ENCODE measurements at regions of chr16 and their contacts with region 1.

Region 1: DNA sequence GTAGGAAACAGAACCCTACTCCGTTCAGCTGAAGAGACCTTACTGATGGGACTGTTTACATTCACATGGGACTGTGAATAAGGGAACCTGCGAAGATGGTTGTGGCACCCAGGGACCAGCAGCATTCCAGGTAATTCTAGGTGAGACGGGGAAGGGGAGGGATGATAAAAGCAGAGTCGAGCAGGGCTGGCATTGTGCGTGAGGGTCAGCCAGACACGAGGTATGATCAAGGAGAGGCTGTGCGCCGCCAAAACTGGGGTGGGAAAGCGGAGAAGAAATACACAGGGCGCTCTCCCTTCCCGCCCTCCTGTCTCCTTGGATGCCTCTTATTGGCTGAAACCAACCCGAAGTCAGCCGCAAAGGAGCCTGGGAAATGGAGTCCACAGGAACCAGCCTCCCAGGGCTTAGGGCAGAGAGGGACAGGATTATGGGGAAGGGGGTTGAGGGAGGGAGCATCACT is 38.4 kb upstream of the CSNK2A2 start:
- DNase-seq: peak; percentile 49
- H3K4me3 Mint-ChIP-seq: peak overlapping the region; percentile 80
- H3K27ac Mint-ChIP-seq: no peak overlapping the region
- H3K4me1 Mint-ChIP-seq: peaks cover 12% of the 10 kb centered on the region
- H3K27me3 Mint-ChIP-seq: peaks cover 40% of the 10 kb centered on the region

Region 2: DNA sequence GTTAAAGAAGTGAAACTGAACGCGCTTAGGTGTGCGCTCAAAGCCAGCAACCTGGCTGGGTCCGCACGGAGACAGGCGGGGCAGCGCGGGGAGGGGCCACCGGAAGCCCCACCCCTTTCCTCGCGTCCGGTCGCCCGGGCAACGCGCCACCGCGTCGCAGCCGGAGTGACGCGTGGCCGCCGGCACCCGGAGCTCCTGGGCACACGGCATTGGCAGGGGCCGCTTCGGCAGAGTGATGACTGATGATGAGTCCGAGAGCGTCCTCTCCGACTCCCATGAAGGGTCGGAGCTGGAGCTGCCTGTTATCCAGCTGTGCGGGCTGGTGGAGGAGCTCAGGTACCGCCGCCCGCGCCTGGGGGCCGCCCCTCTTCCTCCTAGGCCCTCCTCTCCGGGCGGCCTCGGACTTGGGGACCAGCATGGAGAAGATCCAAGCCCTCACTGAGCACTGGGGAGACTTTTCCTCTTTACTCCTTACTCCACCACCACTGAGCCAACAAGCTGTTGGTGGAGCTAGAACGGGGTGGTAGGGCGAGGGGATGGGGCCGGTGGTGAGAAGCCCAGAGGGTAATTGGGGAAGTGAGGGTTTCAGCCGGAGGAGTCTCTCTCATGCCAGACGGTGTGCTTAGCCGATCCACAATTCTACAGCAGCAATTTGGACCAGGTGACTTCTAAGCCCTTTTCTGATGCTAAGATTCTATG is 13.7 kb after region 1 on chr16:
- intact Hi-C with region 1: loop called (anchors 1 kb)
- DNase-seq: peak; percentile 83
- H3K4me3 Mint-ChIP-seq: peak overlapping the region; percentile 86
- H3K27ac Mint-ChIP-seq: peak overlapping the region; percentile 76
- H3K4me1 Mint-ChIP-seq: peaks cover 7% of the 10 kb centered on the region
- H3K27me3 Mint-ChIP-seq: peaks cover 4% of the 10 kb centered on the region

Region 3: DNA sequence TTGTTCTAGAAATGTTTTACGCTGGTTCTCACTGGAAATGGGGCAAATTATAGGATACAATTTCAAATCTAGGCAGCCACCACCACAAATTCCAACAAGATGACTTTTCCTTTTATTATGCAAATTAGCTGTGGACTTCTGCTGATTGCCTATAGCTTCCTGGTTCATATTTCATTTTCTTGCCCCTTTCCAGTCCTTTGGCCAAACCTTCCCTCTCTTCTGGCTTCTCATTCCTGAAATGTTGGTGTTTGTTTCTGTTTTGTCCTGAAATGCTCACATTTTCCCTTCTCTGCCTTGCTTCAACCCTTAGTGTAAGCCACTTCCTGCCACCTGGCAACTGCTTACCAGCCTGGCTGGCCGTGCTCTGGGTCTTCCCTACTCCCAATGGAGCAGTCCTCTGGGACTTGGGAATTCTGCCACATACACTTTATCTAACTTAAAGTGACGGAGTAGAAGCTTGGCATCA is 44.6 kb after region 1 on chr16:
- intact Hi-C with region 1: no loop called
- DNase-seq: no peak
- H3K4me3 Mint-ChIP-seq: no peak overlapping the region
- H3K27ac Mint-ChIP-seq: no peak overlapping the region
- H3K4me1 Mint-ChIP-seq: no peaks in the 10 kb centered on the region
- H3K27me3 Mint-ChIP-seq: peaks cover 1% of the 10 kb centered on the region

Measured in activated T-helper 2 cell treated with anti-CD3 and anti-CD28 coated beads, Interferon-gamma antibody, Interleukin-2, Interleukin-4, amounts not matched to agents 10 μg/mL and 5 μg/mL and 100 μg/mL, durations not matched to agents 14 hours and 24 hours and 36 hours (primary cell).